ENCODE measurements at regions of chr9 and their contacts with region 1.

Region 1: DNA sequence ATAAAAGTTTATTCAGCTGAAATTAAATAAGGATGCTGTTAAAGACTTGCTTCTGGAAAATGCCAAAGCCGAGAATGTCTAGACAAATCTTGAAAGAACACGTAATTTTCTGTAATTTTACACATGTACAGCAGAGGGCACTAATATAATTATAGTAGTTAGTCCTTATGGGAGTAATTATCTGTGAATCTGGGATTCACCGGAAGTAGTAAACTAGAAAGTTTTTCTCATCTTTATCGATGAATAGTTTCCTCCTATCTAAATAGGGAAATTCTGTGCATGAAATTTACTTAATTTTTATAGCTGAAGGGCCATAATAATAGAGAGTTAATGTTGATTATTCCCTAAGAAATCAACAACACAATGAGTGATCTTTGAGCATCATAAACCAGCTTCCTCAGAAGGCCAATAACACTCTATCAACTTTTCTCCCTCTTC is 18.4 kb upstream of the CNTLN start:
- DNase-seq: peak in 1 of 42 donors; percentile 16

Region 2: GRCh38 chr9:17031546-17031945 is 84.9 kb before region 1 on chr9:
- intact Hi-C with region 1: no loop called
- DNase-seq: no peak

Region 3: DNA sequence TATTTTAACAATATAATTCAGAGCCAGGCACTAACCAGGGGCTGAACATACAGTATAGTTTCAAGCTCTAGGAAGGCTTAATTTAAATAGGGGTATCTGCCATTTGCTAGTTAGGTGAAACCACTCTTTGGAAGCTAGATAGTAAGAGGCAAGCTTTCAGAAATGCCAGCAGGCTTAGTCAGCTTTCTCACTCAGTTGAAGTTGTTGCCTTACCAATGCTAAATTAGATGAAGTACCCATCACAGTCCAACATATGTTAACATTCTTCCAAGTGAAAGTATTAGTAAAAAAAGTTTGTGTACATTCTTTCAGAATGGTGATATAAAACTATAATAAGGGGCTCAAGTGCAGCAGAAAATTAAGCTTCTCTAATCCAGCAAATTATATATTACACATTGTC is 233.4 kb after region 1 on chr9:
- intact Hi-C with region 1: loop called (anchors 5 kb)
- DNase-seq: no peak